B cell (primary cell): ENCODE measurements at regions of chr21 and their contacts with region 1.

Region 1: DNA sequence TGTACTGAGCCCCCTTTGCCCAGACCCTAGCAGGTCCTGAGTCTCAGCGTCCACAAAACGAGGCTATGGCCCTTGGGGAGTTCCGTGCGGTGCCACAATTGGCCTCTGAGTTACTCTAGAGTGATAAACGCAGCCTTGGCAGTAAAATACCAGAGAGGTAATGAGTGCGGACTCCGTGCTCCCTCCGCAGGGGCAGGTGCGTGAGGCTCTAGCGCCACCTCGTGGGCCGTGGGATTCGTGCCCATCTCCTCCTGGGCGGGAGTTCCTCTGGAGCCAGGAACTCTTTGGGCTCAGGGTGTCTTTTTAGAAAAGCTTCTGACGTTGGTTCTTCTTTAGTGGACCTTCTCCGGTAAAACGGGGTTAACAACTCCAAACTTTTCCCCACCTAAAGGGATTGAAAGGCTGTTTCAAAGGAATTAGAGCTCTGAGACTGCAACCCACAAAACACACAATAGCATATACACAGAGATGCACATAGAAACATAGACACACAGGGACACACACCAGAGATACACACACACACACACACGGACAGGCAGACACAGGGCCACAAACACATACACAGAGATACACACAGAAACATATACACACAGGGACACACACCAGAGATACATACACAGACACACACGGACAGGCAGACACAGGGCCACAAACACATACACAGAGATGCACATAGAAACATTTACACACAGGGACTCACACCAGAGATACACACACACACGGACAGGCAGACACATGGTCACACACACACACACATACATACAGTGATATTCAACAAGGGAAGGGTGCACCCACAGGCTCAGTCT is 99.4 kb downstream of the KCNJ15 start:
- DNase-seq: peak; percentile 39
- ATAC-seq: no peak
- H3K4me3 ChIP-seq: no peak overlapping the region
- H3K4me3 Mint-ChIP-seq: no peak overlapping the region
- H3K27ac ChIP-seq: no peak overlapping the region
- H3K27ac Mint-ChIP-seq: no peak overlapping the region
- H3K4me1 ChIP-seq: no peaks in the 10 kb centered on the region
- H3K4me1 Mint-ChIP-seq: no peaks in the 10 kb centered on the region
- H3K27me3 ChIP-seq: no peaks in the 10 kb centered on the region
- H3K27me3 Mint-ChIP-seq: peaks cover 8% of the 10 kb centered on the region
- CTCF ChIP-seq: peak; percentile 66

Region 2: DNA sequence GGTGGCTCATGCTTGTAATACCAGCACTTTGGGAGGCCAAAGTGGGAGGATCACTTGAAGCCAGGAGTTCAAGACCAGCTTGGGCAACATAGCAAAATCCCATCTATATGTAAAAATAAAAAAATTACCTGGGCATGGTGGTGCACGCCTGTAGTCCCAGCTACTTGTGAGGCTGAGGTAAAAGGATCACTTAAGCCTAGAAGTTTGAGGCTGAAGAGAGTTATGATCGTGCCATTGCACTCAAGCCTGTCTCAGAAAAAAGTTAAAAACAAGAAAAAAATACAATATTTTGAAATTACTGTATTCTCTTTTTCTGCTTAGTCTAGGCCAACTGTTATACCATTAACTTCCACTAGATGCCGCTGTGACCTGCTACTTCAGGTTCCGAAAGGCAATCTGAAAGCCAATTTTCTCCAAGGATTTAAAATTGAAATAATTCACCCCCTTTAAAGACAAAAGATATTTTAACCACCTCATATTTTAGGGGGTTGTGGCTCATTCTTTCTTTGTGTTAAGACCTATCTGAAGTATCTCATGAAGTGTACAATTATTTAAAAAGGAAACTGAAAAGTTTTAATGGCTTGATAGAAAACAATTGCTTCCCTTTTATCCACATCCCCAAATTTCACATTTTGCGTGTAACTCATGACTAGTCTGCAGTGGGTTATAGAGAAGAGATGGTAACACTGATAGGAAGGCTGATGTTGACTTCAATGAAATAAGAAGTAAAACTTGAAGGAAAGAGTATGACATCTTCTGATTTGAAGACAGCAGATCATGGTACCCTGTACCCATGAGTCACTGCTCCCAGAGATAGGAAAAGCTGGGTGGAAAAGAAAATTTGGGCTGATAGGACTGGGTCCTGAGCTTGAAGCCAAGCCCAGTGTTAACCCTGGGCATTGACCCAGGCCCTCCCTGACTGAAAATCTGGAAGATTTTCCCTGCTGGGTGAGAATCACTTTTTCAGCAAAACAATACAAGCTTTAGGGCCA is 1851.8 kb before region 1 on chr21:
- CTCF ChIA-PET with region 1: no interaction called
- POLR2A ChIA-PET with region 1: no interaction called
- intact Hi-C with region 1: loop called (anchors 10 kb)
- DNase-seq: peak; percentile 58
- ATAC-seq: no peak
- H3K4me3 ChIP-seq: no peak overlapping the region
- H3K4me3 Mint-ChIP-seq: no peak overlapping the region
- H3K27ac ChIP-seq: no peak overlapping the region
- H3K27ac Mint-ChIP-seq: no peak overlapping the region
- H3K4me1 ChIP-seq: no peaks in the 10 kb centered on the region
- H3K4me1 Mint-ChIP-seq: no peaks in the 10 kb centered on the region
- H3K27me3 ChIP-seq: peaks cover 0 to 5% (median 0%) of the 10 kb centered on the region in 4 experiments
- H3K27me3 Mint-ChIP-seq: peaks cover 4% of the 10 kb centered on the region
- CTCF ChIP-seq: peak; percentile 99

Region 3: GRCh38 chr21:36630485-36631206 is 1725.5 kb before region 1 on chr21:
- CTCF ChIA-PET with region 1: interaction called, 4 read pairs
- POLR2A ChIA-PET with region 1: no interaction called
- intact Hi-C with region 1: loop called (anchors 5 kb)
- DNase-seq: peak; percentile 54
- ATAC-seq: no peak
- H3K4me3 ChIP-seq: no peak overlapping the region
- H3K4me3 Mint-ChIP-seq: no peak overlapping the region
- H3K27ac ChIP-seq: no peak overlapping the region
- H3K27ac Mint-ChIP-seq: no peak overlapping the region
- H3K4me1 ChIP-seq: no peaks in the 10 kb centered on the region
- H3K4me1 Mint-ChIP-seq: no peaks in the 10 kb centered on the region
- H3K27me3 ChIP-seq: peaks cover 0 to 8% (median 0%) of the 10 kb centered on the region in 4 experiments
- H3K27me3 Mint-ChIP-seq: peaks cover 8% of the 10 kb centered on the region
- CTCF ChIP-seq: peak; percentile 73

Region 4: GRCh38 chr21:38258521-38259485 is 97.4 kb before region 1 on chr21:
- CTCF ChIA-PET with region 1: no interaction called
- POLR2A ChIA-PET with region 1: no interaction called
- intact Hi-C with region 1: no loop called
- DNase-seq: no peak
- ATAC-seq: no peak
- H3K4me3 ChIP-seq: no peak overlapping the region
- H3K4me3 Mint-ChIP-seq: no peak overlapping the region
- H3K27ac ChIP-seq: no peak overlapping the region
- H3K27ac Mint-ChIP-seq: no peak overlapping the region
- H3K4me1 ChIP-seq: no peaks in the 10 kb centered on the region
- H3K4me1 Mint-ChIP-seq: no peaks in the 10 kb centered on the region
- H3K27me3 ChIP-seq: no peaks in the 10 kb centered on the region
- H3K27me3 Mint-ChIP-seq: no peaks in the 10 kb centered on the region
- CTCF ChIP-seq: no peak

Region 5: GRCh38 chr21:38787461-38788274 is 431.5 kb after region 1 on chr21:
- CTCF ChIA-PET with region 1: no interaction called
- POLR2A ChIA-PET with region 1: no interaction called
- intact Hi-C with region 1: no loop called
- DNase-seq: no peak
- ATAC-seq: no peak
- H3K4me3 ChIP-seq: no peak overlapping the region
- H3K4me3 Mint-ChIP-seq: no peak overlapping the region
- H3K27ac ChIP-seq: no peak overlapping the region
- H3K27ac Mint-ChIP-seq: no peak overlapping the region
- H3K4me1 ChIP-seq: no peaks in the 10 kb centered on the region
- H3K4me1 Mint-ChIP-seq: peaks cover 5% of the 10 kb centered on the region
- H3K27me3 ChIP-seq: peaks cover 0 to 22% (median 5%) of the 10 kb centered on the region in 4 experiments
- H3K27me3 Mint-ChIP-seq: peaks cover 39% of the 10 kb centered on the region
- CTCF ChIP-seq: no peak